ENCODE measurements at regions of chr4 and their contacts with region 1.

Region 1: DNA sequence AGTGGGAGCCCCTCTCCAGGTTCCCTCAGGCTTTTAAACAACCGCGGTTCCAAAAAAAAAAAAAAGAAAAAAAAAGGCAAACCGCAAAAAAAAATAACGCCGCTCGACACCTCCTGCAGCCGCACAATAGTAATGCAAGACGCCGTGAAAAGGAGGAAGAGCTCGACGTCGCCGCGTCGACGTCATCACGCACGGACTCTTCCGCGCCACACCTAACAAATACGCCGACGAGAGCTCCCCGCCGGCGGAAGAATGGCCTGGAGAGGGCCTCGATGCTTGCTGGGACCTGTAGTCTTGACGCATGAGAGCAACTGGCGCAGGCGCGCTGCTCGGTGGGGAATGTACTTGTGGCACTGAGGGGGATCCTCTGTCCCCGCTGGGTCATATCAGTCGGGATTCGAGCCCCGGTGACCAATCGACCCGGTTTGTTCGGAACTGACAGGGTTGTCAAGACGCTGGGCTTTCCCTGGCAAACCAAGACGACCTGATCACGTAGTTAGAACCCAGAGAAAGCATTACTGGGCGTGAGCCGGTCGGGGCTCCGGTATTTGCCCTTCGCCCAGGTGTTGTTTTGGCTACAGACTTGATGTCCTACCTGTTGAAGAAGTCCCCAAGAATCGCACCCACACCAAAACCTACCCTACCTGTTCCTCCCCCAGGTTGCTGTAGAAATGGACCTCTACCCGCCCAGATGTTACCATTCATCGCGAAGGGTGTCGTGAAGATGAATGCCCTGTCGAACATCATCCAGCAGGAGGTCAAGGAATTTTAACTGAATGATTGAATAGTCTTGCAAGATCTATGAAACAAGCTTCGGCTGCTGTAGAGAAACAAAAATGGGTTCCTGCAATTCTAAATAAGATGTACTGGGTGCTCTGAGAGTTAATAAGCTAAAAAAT is at the start of gene CBR4:
- DNase-seq: peak; percentile 94
- H3K4me3 Mint-ChIP-seq: peak within 1 kb of the TSS; percentile 94
- H3K27ac Mint-ChIP-seq: peak within 1 kb of the TSS; percentile 94
- H3K4me1 Mint-ChIP-seq: peaks cover 33% of the 10 kb centered on the region
- H3K27me3 Mint-ChIP-seq: peaks cover 9% of the 10 kb centered on the region
- total RNA-seq, gene CBR4: 17.8 and 21.6 TPM in 2 replicates

Region 2: GRCh38 chr4:168318266-168318895 is 692.0 kb before region 1 on chr4 and contains the start of gene DDX60:
- intact Hi-C with region 1: loop called (anchors 5 kb)
- DNase-seq: peak; percentile 81
- H3K4me3 Mint-ChIP-seq: peak within 1 kb of the TSS; percentile 85
- H3K27ac Mint-ChIP-seq: peak within 1 kb of the TSS; percentile 83
- H3K4me1 Mint-ChIP-seq: peaks cover 32% of the 10 kb centered on the region
- H3K27me3 Mint-ChIP-seq: no peaks in the 10 kb centered on the region
- total RNA-seq, gene DDX60: 5.3 and 5.6 TPM in 2 replicates

Region 3: DNA sequence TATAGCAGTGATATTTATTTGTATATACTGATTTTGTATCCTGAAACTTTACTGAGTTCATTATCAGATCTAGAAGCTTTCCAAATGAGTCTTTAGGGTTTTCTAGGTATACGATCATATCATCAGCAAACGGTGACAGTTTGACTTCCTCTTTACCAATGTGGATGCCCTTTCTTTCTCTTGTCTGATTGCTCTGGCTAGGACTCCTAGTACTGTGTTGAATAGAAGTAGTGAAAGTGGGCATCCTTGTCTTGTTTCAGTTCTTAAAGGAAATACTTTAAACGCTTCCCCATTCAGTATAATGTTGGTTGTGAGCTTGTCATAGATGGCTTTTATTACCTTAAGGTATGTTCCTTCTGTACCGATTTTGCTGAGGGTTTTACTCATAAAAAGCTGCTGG is 37.8 kb before region 1 on chr4:
- intact Hi-C with region 1: loop called (anchors 5 kb)
- DNase-seq: no peak
- H3K4me3 Mint-ChIP-seq: no peak overlapping the region
- H3K27ac Mint-ChIP-seq: no peak overlapping the region
- H3K4me1 Mint-ChIP-seq: peaks cover 12% of the 10 kb centered on the region
- H3K27me3 Mint-ChIP-seq: peaks cover 4% of the 10 kb centered on the region

Region 4: DNA sequence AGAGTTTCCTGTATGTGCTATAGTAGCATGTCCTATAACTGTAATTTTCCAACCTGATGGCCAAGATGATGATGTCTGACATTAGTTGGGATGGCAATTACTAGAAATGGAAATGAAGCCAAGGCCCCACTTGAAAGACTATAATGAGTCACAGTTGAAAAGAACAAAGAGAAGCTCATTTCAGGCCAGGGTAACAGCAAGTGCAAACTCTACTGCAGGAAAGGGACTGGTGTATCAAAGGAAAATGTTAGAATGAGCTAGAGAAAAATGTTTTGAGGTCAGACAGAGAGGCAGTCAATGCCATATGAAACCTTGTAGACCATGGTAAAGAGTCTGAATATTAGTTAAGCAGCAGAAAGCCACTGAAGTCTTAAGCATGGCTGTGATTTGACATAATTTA is 406.6 kb after region 1 on chr4:
- intact Hi-C with region 1: loop called (anchors 5 kb)
- DNase-seq: no peak
- H3K4me3 Mint-ChIP-seq: no peak overlapping the region
- H3K27ac Mint-ChIP-seq: peak overlapping the region; percentile 39
- H3K4me1 Mint-ChIP-seq: peaks cover 30% of the 10 kb centered on the region
- H3K27me3 Mint-ChIP-seq: no peaks in the 10 kb centered on the region

Region 5: DNA sequence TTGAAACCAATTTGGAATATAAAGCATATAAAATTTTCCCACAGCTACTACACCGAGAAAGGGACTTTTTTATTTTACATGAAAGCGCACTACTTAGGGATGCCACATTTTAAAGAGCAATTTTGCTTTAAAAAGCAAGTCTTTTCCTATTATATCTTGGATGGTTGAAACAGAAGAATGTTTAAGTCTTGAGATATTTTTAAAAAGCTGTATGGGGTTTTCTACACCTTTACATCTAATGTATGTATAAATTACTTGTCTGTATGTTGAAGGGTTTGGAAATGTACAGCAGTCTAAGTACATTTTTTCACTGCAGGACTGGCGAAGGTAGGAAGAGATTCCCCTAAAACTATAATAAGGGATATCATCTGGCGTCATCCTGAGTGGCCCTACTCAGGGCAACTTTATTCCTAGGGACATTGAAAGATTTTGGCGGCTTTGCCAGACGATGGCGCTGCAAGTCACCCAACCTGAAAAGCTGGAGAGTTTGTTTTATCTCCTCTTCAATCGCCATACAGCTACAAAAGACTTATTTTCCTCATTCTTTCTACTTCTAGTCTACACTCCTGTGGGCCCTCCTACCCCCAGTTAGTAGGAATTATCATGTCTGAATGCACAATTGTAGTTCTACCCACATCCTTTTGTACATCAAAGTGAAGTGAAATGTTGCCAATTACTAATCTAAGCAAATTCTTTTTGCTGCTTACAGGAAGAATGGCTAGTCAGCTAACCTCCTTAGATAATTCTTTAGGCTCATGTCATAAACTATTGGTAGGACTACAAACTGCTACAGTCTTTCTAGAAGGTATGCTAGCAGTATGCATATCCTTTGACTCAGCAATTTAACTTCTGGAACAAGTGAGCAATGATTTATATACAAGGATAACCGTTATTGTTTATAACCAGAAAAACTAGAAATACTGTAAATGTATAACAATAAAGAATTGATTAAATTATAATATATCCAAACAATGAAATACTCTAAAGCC is 602.8 kb after region 1 on chr4:
- intact Hi-C with region 1: loop called (anchors 5 kb)
- DNase-seq: peak; percentile 66
- H3K4me3 Mint-ChIP-seq: peak overlapping the region; percentile 96
- H3K27ac Mint-ChIP-seq: peak overlapping the region; percentile 98
- H3K4me1 Mint-ChIP-seq: peaks cover 50% of the 10 kb centered on the region
- H3K27me3 Mint-ChIP-seq: no peaks in the 10 kb centered on the region